Left cardiac atrium (tissue), 4 donors: ENCODE measurements at regions of chr14 and their contacts with region 1.

Region 1: DNA sequence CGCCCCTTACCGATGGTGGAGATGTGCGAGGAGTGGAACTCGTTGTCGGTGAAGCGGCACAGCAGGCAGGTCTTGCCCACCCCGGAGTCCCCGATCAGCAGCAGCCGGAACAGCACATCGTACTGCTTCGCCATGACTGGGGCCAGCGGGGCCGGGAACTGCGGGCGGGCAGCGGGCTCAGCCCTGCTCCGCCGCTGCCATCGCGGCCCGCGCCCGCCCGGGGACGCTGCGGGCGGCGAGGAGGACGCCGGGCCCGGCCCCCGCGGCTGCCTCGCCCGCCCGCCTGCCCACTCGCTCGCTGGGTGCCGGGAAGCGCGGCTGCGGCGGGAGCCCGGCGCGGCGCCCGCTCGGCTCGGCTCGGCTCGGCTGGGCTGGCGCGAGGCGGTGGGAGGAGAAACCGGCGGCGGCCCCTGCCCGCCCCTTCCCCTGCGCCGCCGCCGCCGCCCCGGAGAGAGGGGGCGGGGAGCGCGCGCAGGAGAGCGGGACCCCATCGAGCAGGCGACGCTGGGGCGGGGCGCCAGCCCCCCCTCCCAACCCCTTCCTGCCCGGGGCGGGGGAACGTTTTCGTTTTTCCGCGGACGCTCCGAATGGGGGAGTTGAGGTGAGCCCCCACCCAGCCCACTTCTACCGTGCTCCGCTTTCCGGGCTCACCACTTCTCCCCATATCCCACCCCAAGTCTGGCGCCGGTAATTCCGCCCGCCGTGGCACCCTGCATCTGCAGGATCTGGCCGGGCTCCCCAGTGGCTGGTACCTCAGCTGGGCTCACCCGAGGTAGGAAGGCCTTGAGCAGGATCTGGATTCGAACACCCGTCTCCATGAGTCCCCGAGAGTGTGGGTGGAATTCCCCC is at the start of gene RAB15:
- DNase-seq: no peak
- ATAC-seq: peak; percentile 82 to 87
- total RNA-seq, gene RAB15: 12.9 to 51.4 TPM

Region 2: DNA sequence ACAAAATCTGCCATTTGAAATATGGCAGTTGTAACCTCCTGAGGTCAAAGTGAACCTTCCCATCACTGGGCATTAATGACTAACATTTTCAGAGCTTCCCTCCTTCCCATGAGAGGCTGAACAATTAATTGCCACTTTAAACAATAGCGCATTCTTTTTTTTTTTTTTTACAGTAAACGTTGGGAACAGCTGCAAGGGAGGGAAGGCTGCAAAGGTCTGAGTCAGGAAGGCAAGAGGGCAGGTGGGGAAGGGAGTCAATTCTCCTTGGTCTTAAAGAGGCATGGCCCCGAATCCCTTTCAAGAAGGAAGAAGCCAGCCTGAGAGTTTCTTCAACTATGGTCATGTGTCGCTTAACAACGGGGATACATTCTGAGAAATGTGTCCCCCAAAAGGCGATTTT is 309.0 kb before region 1 on chr14:
- intact Hi-C with region 1: no loop called
- DNase-seq: no peak
- ATAC-seq: no peak

Region 3: DNA sequence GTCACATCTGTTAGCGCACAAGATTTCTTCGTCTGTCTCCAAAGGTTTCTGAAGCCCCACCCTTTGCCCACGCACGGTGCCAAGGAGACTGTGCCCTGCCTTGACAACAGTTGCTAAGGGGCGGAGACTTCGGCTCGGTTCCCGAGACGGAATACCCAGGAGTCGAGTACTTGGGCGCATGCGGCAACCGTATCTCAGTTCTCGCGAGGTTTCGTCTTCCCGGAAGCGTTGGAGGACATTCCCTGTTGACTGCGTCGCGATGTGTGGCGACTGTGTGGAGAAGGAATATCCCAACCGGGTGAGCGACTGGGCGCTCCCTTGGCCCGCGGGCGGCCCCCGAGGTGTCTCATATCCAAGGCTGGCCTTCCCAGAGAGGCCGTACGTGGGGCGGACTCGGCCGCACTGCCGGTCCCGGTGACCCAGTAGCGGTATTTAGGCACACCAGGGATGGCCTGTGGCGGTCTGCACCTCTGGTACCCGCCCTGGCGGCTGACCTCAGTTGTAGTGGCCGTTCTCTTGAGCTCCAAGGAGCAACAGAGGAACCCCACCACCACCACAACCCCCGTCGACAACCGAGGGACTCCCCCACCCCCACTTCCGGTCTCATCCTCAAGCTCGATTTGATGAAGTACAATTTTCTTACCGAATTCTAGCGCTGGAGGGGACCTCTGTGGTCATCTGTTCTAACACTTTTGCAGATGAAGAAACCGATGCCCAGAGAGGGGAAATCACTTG is 57.8 kb before region 1 on chr14 and contains the start of gene CHURC1:
- intact Hi-C with region 1: loop called in 1 of 2 experiments (anchors 10 kb)
- DNase-seq: peak; percentile 99
- ATAC-seq: peak; percentile 100
- total RNA-seq, gene CHURC1: 89.1 to 97.4 TPM